ENCODE measurements at regions of chr12 and their contacts with region 1.

Region 1: GRCh38 chr12:3299929-3300832 is 190.8 kb upstream of the PRMT8 start:
- DNase-seq: peak; percentile 88
- ATAC-seq: peak; percentile 90
- H3K4me3 Mint-ChIP-seq: peak overlapping the region; percentile 25
- H3K27ac Mint-ChIP-seq: peak overlapping the region; percentile 43
- H3K4me1 Mint-ChIP-seq: peaks cover 11% of the 10 kb centered on the region
- H3K27me3 Mint-ChIP-seq: no peaks in the 10 kb centered on the region

Region 2: GRCh38 chr12:3288690-3289089 is 11.5 kb before region 1 on chr12:
- CTCF ChIA-PET with region 1: interaction called, 33 read pairs
- POLR2A ChIA-PET with region 1: interaction called, 3 read pairs
- DNase-seq: no peak
- ATAC-seq: no peak
- H3K4me3 Mint-ChIP-seq: no peak overlapping the region
- H3K27ac Mint-ChIP-seq: no peak overlapping the region
- H3K4me1 Mint-ChIP-seq: no peaks in the 10 kb centered on the region
- H3K27me3 Mint-ChIP-seq: no peaks in the 10 kb centered on the region

Region 3: DNA sequence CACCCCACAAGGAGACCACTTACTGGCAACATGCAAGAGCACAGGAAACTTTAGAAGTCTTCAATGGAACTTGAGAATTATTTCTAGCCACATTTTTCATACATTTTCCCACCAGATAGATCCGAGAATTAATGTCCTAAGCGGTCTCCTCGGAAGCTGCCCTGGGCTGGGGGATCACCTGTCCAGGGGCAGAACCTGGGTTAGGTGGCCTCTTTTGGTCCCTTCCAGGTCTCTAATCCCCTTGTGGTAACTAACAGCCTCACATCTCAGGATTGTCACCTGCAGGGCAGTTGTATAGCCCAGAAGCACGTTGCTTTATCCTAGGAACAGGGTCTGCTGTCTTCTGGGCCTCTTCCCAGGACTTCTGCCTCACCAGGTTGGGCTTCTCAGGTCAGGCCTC is 152.2 kb after region 1 on chr12:
- CTCF ChIA-PET with region 1: interaction called, 12 read pairs
- POLR2A ChIA-PET with region 1: no interaction called
- DNase-seq: no peak
- ATAC-seq: no peak
- H3K4me3 Mint-ChIP-seq: no peak overlapping the region
- H3K27ac Mint-ChIP-seq: no peak overlapping the region
- H3K4me1 Mint-ChIP-seq: peaks cover 12% of the 10 kb centered on the region
- H3K27me3 Mint-ChIP-seq: peaks cover 36% of the 10 kb centered on the region

Region 4: DNA sequence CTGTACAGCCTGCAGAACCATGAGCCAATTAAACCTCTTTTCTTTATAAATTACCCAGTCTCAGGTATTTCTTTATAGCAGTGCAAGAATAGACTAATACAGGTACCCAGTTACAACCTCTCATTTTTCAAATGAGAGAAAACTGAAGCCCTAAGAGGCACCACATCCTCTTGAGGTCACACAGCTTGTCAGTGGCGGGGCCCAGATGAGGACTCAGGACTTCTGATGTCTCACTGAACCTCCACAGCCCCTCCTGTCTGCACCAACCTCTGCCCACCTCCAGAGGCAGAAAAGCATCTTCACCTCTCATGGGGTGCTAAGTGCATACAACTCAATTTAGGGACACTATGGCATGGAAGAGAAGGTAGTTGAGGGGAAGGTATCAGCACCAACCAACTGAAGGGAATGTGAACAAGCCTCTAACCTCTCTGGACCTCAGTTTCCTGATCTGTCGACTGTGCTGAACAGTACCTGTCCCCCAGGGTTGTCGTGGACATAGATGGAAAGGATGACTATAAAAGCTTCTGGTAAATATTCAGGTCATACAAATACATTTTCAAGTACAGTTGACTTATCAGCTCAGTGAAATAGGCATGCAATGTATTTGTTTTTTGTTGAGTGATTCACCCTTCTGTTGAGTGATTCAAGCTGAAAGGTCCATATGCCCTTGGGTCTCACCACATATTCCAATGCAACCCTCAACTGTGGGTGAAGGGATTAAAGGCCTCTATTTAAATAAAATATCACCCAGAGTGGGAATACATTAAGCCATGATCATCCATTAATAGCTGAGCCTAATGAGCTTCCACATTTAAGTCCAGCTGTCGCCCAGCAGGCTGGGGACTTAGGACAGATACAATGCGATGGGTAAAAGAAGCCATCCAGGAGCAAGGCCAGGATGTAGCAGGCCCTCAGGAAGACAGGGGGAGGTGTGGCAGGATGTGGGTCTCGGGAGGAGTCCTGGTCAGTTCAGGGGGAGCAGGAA is 332.4 kb after region 1 on chr12:
- CTCF ChIA-PET with region 1: interaction called, 11 read pairs
- POLR2A ChIA-PET with region 1: no interaction called
- DNase-seq: peak; percentile 81
- ATAC-seq: peak; percentile 95
- H3K4me3 Mint-ChIP-seq: no peak overlapping the region
- H3K27ac Mint-ChIP-seq: peak overlapping the region; percentile 92
- H3K4me1 Mint-ChIP-seq: peaks cover 31% of the 10 kb centered on the region
- H3K27me3 Mint-ChIP-seq: no peaks in the 10 kb centered on the region

Region 5: DNA sequence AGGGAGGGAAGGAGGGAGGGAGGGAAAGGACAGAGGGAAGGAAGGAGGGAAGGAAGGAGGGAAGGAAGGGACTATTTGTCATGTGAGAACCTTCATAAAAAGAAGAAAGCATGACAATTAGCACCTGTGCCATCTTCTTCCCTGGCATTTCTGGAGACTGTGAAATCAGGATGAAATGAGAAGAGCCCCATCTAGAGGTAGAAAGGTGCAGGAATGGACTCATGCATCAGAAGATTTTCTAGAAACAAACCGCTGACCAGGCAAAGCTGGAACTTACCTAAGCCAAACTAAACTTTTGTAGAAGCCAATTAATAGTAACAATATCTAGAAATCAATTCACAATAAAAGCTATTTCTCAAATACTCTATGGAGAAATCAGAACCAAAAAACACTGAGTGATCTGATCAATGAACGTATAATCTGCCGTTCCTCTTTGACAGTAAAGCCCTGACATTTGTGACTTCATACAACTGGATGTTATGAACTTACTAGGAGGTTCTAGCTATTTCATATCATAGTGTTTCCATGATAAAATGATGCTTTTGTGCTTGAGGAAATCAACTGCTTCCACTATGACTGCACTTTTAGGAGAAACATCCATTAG is 477.1 kb after region 1 on chr12:
- CTCF ChIA-PET with region 1: interaction called, 34 read pairs
- POLR2A ChIA-PET with region 1: no interaction called
- DNase-seq: peak; percentile 39
- ATAC-seq: no peak
- H3K4me3 Mint-ChIP-seq: no peak overlapping the region
- H3K27ac Mint-ChIP-seq: no peak overlapping the region
- H3K4me1 Mint-ChIP-seq: peaks cover 4% of the 10 kb centered on the region
- H3K27me3 Mint-ChIP-seq: no peaks in the 10 kb centered on the region

Region 6: GRCh38 chr12:3821441-3821840 is 521.3 kb after region 1 on chr12:
- CTCF ChIA-PET with region 1: interaction called, 10 read pairs
- POLR2A ChIA-PET with region 1: no interaction called
- DNase-seq: no peak
- ATAC-seq: no peak
- H3K4me3 Mint-ChIP-seq: no peak overlapping the region
- H3K27ac Mint-ChIP-seq: no peak overlapping the region
- H3K4me1 Mint-ChIP-seq: no peaks in the 10 kb centered on the region
- H3K27me3 Mint-ChIP-seq: no peaks in the 10 kb centered on the region

Measured in activated CD8-positive, alpha-beta T cell treated with anti-CD3 and anti-CD28 coated beads, Interleukin-2, amount 10 ng/mL, durations not matched to agents 7 days and 5 days (primary cell).